ENCODE measurements at regions of chr12 and their contacts with region 1.

Region 1: DNA sequence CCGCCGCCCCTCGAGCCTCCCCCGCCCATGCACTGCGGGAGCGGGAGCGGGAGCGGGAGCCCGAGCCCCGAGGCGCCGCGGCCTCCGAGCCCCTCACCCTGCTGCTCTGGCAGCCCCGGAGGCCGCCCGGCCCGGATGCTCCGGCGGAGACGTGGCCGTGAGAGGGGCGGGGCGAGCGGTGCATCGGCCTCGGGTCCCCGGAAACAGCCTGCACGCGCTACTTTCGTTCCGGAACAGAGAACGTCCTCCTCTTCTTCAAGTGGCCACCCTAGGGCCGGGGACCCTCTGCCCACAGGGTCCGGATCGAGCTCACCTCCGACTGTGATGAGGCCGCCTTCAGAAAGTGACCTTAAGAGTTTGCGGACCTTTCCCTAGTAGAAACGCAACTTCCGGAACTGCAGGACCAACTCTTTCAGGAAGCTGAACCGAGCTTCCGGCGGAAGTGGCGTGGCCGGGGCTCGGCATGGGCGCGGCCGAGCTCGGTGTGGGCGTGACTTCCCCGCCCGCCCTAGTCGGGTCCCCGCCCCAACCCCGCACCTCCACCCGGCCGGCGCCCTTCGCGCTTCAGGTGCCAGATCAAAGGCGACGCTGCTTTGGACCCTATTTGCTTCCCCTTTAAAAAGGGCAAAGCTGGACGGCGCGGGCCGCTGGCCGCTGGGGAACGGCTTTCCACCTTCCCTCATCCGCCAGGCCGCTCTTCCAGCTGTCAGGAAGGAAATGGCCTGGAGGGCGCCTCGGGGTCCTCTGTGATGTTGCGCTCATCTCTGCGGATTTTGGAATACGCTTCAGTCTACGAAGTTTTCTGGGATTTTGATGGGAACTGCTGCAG is at the start of gene GOLGA3:
- DNase-seq: peak; percentile 91 to 95 (median 94)
- H3K4me3 ChIP-seq: peak within 1 kb of the TSS; percentile 57 to 94 (median 82)
- H3K4me3 Mint-ChIP-seq: peak within 1 kb of the TSS; percentile 82 to 94
- H3K27ac ChIP-seq: peak within 1 kb of the TSS; percentile 87 to 100
- H3K27ac Mint-ChIP-seq: peak within 1 kb of the TSS; percentile 99 to 100 (median 100)
- H3K4me1 ChIP-seq: peaks cover 17 to 22% of the 10 kb centered on the region in 2 donors
- H3K4me1 Mint-ChIP-seq: peaks cover 23% of the 10 kb centered on the region
- H3K27me3 ChIP-seq: no peaks in the 10 kb centered on the region
- H3K27me3 Mint-ChIP-seq: peaks cover 0 to 3% (median 1%) of the 10 kb centered on the region in 3 donors
- CTCF ChIP-seq: no peak
- polyA plus RNA-seq, gene GOLGA3: 1.2 to 12.0 (median 2.4) TPM

Region 2: GRCh38 chr12:132506328-132507160 is 322.4 kb before region 1 on chr12:
- intact Hi-C with region 1: loop called in 1 of 2 experiments (anchors 10 kb)
- DNase-seq: peak; percentile 29 to 49 (median 42)
- H3K4me3 ChIP-seq: peak overlapping the region in 1 of 3 experiments; percentile 61
- H3K4me3 Mint-ChIP-seq: peak overlapping the region; percentile 61 to 83
- H3K27ac ChIP-seq: peak overlapping the region in 1 of 2 donors; percentile 70
- H3K27ac Mint-ChIP-seq: peak overlapping the region in 6 of 7 donors; percentile 15 to 80 (median 58)
- H3K4me1 ChIP-seq: peaks cover 49 to 58% of the 10 kb centered on the region in 2 donors
- H3K4me1 Mint-ChIP-seq: peaks cover 53% of the 10 kb centered on the region
- H3K27me3 ChIP-seq: no peaks in the 10 kb centered on the region
- H3K27me3 Mint-ChIP-seq: peaks cover 0 to 28% (median 0%) of the 10 kb centered on the region in 3 donors
- CTCF ChIP-seq: no peak

Region 3: DNA sequence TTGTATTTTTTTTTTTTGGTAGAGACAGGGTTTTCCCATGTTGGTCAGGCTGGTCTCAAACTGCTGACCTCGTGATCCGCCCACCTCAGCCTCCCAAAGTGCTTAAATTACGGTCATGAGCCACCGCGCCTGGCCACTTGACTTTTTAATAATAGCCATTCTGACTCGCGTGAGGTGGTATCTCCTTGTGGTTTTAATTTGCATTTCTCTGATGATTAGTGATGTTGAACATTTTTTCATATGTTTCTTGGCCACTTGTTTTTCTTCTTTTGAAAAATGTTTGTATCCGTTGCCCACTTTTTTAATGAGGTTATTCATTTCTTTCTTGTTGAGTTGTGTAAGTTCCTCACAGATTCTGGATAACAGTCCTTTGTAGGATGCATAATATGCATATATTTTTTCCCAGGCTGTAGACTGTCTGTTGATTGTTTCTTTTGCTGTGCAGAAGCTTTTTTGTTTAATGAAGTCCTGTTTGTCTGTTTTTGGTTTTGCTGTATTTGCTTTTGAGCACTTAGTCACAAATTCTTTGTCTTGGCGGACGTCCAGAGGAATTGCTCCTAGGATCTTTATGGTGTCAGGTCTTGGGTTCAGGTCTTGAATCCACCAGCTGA is 128.6 kb before region 1 on chr12:
- intact Hi-C with region 1: no loop called
- DNase-seq: no peak
- H3K4me3 ChIP-seq: no peak overlapping the region
- H3K4me3 Mint-ChIP-seq: no peak overlapping the region
- H3K27ac ChIP-seq: no peak overlapping the region
- H3K27ac Mint-ChIP-seq: peak overlapping the region in 1 of 7 donors; percentile 71
- H3K4me1 ChIP-seq: peaks cover 0 to 3% of the 10 kb centered on the region in 2 donors
- H3K4me1 Mint-ChIP-seq: peaks cover 7% of the 10 kb centered on the region
- H3K27me3 ChIP-seq: no peaks in the 10 kb centered on the region
- H3K27me3 Mint-ChIP-seq: peaks cover 0 to 1% (median 0%) of the 10 kb centered on the region in 3 donors
- CTCF ChIP-seq: no peak

Region 4: DNA sequence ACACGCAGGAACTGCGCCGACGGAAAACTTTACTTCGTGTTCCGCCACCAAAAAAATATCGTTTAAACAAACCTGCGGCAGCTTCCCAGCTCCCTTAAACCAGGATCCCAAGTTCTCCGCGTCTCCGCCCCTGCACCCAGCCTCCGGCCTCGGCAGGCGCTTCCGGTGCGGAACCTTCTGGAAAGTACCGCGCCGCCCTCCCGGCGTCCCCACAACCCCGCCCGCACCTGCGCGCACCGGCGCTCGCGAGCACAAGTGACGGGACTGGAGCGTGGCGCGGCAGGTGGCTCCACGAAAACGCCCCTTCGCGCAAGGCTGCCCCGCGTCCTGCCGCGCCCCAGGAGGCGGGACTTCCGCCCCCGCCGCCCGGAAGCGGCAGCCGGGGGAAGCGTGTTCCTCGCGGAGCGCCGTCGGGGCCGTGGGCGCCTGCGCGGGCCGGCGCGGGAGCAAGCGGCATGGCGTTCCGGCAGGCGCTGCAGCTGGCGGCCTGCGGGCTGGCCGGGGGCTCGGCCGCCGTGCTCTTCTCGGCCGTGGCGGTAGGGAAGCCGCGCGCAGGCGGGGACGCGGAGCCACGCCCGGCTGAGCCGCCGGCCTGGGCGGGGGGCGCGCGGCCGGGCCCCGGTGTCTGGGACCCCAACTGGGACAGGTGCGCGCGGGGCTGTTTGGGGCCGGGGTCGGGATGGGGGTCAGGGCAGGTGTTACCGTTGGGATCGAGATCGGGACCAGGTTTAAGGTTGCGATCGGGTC is 118.3 kb before region 1 on chr12 and contains the start of gene PGAM5:
- intact Hi-C with region 1: loop called in 1 of 2 experiments (anchors 10 kb)
- DNase-seq: peak; percentile 62 to 73 (median 72)
- H3K4me3 ChIP-seq: peak within 1 kb of the TSS; percentile 56 to 97 (median 92)
- H3K4me3 Mint-ChIP-seq: peak within 1 kb of the TSS; percentile 89 to 97
- H3K27ac ChIP-seq: peak within 1 kb of the TSS; percentile 42 to 74
- H3K27ac Mint-ChIP-seq: peak within 1 kb of the TSS; percentile 72 to 88 (median 83)
- H3K4me1 ChIP-seq: peaks cover 16 to 20% of the 10 kb centered on the region in 2 donors
- H3K4me1 Mint-ChIP-seq: peaks cover 15% of the 10 kb centered on the region
- H3K27me3 ChIP-seq: no peaks in the 10 kb centered on the region
- H3K27me3 Mint-ChIP-seq: peaks cover 0 to 2% (median 2%) of the 10 kb centered on the region in 3 donors
- CTCF ChIP-seq: no peak
- polyA plus RNA-seq, gene PGAM5: 7.0 to 10.3 (median 9.6) TPM

Region 5: DNA sequence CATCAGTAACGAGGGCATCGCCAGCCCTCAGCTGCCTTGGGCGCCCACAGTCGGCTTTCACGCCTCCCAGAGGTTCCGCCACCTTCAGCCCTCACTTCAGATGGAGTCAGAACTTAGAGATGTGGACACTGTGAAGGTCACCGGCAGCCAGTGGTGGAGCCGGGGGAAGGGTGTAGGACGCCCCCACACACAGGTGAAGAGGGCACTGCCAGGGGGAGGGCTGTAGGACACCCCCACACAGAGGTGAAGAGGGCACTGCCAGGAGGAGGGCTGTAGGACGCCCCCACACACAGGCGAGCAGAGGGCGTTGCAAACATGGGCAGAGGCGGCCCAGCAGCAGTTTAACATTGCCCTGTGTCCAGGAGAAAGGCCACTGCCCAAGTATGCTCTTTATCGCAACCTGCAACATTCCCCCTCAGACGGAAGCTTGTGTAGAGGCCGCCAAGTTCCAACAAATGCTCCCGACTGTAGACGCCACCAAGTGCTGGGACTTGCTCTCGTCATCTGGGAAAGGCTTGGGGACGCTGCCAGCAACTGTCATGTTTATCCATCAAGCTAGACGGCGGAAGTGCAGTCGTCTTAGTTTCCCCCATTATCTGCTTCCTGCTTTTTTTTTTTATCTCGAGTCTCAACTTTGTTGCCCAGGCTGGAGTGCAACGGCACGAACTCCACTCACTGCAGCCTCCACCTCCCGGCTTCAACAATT is 62.4 kb before region 1 on chr12:
- intact Hi-C with region 1: loop called (anchors 5 kb)
- DNase-seq: peak in 2 of 3 donors; percentile 44 to 54
- H3K4me3 ChIP-seq: peak overlapping the region; percentile 5 to 68 (median 28)
- H3K4me3 Mint-ChIP-seq: peak overlapping the region; percentile 72 to 90
- H3K27ac ChIP-seq: peak overlapping the region; percentile 57 to 70
- H3K27ac Mint-ChIP-seq: peak overlapping the region; percentile 44 to 92 (median 85)
- H3K4me1 ChIP-seq: peaks cover 66 to 79% of the 10 kb centered on the region in 2 donors
- H3K4me1 Mint-ChIP-seq: peaks cover 67% of the 10 kb centered on the region
- H3K27me3 ChIP-seq: no peaks in the 10 kb centered on the region
- H3K27me3 Mint-ChIP-seq: peaks cover 0 to 3% (median 2%) of the 10 kb centered on the region in 3 donors
- CTCF ChIP-seq: no peak

Region 6: GRCh38 chr12:132839558-132840235 is 10.8 kb after region 1 on chr12:
- intact Hi-C with region 1: no loop called
- DNase-seq: no peak
- H3K4me3 ChIP-seq: no peak overlapping the region
- H3K4me3 Mint-ChIP-seq: no peak overlapping the region
- H3K27ac ChIP-seq: no peak overlapping the region
- H3K27ac Mint-ChIP-seq: peak overlapping the region in 3 of 7 donors; percentile 38 to 61 (median 48)
- H3K4me1 ChIP-seq: no peaks in the 10 kb centered on the region
- H3K4me1 Mint-ChIP-seq: peaks cover 3% of the 10 kb centered on the region
- H3K27me3 ChIP-seq: no peaks in the 10 kb centered on the region
- H3K27me3 Mint-ChIP-seq: peaks cover 0 to 2% (median 1%) of the 10 kb centered on the region in 3 donors
- CTCF ChIP-seq: no peak

Region 7: DNA sequence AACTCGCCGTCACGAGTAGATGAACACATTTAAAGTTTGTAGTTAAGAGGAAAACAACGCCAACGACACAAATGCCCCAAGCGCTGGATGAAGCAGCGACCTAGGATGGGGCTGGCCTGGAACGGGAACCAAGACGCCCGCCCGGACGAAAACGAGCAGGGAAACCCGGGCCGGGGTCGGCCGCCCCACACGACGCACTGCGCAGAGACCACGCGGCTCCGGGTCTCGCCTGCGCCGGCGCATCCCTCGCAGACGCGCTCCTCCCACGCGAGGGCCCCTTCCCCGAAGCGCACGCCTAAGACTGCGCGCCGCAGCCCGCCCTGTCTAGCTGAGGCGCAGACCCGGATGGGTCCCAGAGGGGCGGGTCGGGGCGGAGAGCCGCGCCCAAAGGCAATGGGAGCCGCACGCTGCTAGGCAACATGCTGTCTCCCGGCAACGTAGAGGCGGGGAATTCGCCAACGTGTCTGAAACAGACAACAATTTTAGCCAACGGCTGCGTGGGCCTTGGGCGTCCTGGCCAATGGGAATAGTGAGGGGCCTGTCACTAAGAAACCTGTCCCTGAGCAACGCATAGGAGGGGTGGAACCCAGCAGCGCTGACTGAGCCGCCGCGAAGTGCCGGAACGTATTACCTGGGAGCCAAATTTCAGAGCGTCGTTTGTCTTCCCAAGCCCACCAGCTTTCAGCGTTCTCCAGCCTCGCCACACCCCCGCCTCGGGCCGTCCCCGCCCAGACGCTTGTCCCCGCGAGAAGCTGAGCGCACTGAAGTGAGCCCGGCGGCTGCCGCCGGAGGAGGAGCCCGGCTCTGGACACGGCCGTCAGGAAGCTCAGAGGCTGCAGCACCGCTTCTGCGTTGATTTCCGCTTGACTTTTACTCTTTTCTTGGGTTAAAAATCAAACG is 79.5 kb after region 1 on chr12:
- intact Hi-C with region 1: loop called in 1 of 2 experiments (anchors 2 kb)
- DNase-seq: peak; percentile 56 to 66 (median 66)
- H3K4me3 ChIP-seq: peak overlapping the region; percentile 13 to 76 (median 45)
- H3K4me3 Mint-ChIP-seq: peak overlapping the region; percentile 80 to 94
- H3K27ac ChIP-seq: no peak overlapping the region
- H3K27ac Mint-ChIP-seq: peak overlapping the region in 5 of 7 donors; percentile 21 to 90 (median 70)
- H3K4me1 ChIP-seq: peaks cover 13 to 17% of the 10 kb centered on the region in 2 donors
- H3K4me1 Mint-ChIP-seq: peaks cover 16% of the 10 kb centered on the region
- H3K27me3 ChIP-seq: peaks cover 15 to 52% of the 10 kb centered on the region in 2 donors
- H3K27me3 Mint-ChIP-seq: peaks cover 43 to 59% (median 58%) of the 10 kb centered on the region in 3 donors
- CTCF ChIP-seq: no peak

Region 8: DNA sequence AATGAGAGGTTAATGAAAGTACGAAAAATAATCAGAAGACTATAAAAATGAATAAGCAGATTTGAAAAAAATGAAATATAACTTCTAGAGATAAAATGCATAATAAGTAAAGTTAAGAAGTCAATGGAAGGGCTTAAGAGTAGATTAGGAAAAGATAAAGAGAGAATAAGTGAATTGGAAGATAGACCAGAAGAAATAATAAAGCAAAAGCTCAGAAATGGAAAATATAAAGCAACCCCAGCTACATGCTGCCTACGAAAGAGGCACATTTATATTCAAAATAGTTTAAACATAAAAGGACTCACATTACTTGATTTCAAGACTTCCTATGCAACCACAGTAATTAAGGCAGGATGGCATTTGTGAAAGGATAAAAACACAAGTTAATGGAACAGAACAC is 107.2 kb after region 1 on chr12:
- intact Hi-C with region 1: no loop called
- DNase-seq: no peak
- H3K4me3 ChIP-seq: no peak overlapping the region
- H3K4me3 Mint-ChIP-seq: no peak overlapping the region
- H3K27ac ChIP-seq: no peak overlapping the region
- H3K27ac Mint-ChIP-seq: no peak overlapping the region
- H3K4me1 ChIP-seq: no peaks in the 10 kb centered on the region
- H3K4me1 Mint-ChIP-seq: no peaks in the 10 kb centered on the region
- H3K27me3 ChIP-seq: no peaks in the 10 kb centered on the region
- H3K27me3 Mint-ChIP-seq: peaks cover 0 to 2% (median 0%) of the 10 kb centered on the region in 3 donors
- CTCF ChIP-seq: no peak

Measured in CD14-positive monocyte (primary cell).